Activated CD4-positive, alpha-beta memory T cell treated with anti-CD3 and anti-CD28 coated beads, Interleukin-2, amount 10 ng/mL, durations not matched to agents 7 days and 5 days (primary cell): ENCODE measurements at regions of chr19 and their contacts with region 1.

Region 1: GRCh38 chr19:48724796-48725753 is 5.5 kb upstream of the MAMSTR start:
- DNase-seq: no peak
- H3K4me3 Mint-ChIP-seq: no peak overlapping the region
- H3K27ac Mint-ChIP-seq: peak overlapping the region; percentile 82
- H3K4me1 Mint-ChIP-seq: peaks cover 43% of the 10 kb centered on the region
- H3K27me3 Mint-ChIP-seq: no peaks in the 10 kb centered on the region

Region 2: DNA sequence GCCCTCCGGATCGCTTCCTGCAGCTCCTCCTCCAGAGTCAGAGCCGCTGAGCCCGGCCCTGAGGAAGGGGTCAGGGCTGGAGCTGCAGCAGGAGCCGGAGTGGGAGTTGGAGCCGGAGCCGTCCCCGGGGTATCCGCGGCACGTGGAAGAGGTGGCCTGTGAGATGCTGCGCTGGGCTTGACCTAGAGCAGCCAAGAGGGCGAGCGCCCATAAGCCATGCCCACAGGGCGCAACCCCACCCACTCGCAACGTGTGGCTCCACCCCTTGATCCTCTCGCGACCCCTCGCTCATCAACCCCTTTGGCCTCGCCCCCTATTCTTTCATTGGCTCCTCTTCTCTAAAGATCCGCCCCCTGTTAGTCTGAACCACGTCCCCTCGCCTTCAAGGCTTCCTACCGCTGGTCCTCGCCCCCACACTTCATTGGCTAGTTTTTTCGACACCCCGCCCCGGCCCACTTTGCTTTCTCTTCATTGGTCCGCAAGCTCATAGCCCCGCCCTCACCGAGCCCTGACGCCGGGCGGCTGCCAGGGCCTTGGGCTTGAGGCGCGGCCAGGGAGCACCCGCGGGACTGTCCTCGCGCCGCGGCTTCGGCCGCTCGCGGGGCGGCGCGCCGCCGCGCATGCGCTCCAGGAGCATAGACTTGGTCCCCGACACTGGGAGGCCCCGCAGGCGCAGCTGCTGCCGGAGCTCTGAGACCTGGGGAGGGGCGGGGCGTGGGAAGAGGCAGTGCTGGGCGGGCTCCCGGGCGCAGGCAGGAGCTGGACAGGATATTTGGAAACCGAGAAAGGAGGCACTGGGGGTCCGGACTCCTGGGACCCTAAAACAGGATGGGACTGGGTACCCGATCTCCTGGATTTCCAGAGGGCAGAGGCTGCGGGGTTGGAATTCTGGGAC is 11.0 kb before region 1 on chr19:
- CTCF ChIA-PET with region 1: interaction called, 3 read pairs
- POLR2A ChIA-PET with region 1: interaction called, 10 read pairs
- DNase-seq: peak; percentile 99
- H3K4me3 Mint-ChIP-seq: peak overlapping the region; percentile 76
- H3K27ac Mint-ChIP-seq: peak overlapping the region; percentile 44
- H3K4me1 Mint-ChIP-seq: peaks cover 18% of the 10 kb centered on the region
- H3K27me3 Mint-ChIP-seq: no peaks in the 10 kb centered on the region